Mammary epithelial cell (primary cell): ENCODE measurements at regions of chr5 and their contacts with region 1.

Region 1: GRCh38 chr5:149960272-149961185 is at the start of gene SLC26A2:
- DNase-seq: peak; percentile 98
- H3K4me3 ChIP-seq: peak within 1 kb of the TSS; percentile 58 to 78 (median 74)
- H3K27ac ChIP-seq: peak within 1 kb of the TSS; percentile 75
- H3K4me1 ChIP-seq: peaks cover 23% of the 10 kb centered on the region
- H3K27me3 ChIP-seq: no peaks in the 10 kb centered on the region
- CTCF ChIP-seq: no peak
- total RNA-seq, gene SLC26A2: 18.1 to 63.2 TPM

Region 2: DNA sequence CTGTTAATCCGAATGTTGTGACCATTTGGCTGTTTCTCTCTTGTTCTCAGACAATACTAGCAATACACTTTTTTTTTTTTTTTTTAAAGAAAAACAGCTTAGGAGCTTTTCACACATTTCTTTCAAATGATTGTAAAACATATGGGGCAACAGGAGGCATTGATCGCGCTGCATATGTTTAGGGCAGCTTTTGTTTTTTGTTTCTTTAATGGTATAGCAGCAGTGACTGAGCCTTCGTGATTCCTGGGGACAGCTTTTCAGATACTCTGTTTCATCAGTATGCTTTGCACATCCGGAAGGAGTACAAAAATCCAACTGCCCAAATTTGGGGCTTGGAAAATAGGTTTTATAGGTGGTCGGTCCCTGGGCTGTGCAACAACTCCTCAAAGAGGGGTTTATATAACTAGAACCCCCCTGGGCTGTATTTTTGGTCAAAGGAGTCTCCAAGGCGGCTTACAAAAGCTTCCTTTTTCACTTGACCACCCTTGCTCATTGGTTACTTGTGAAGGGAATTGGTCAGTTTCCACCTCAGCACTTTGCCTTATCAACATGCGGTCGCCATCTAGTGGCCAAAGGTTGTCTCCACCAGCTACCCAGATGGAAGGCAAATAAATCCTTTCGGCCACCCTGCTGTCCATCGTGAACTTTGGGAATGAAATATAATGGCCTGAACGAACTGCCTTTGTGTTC is 107.7 kb before region 1 on chr5:
- CTCF ChIA-PET with region 1: interaction called, 15 read pairs
- dilution Hi-C with region 1: no loop called
- in situ Hi-C with region 1: loop called in 1 of 2 experiments (anchors 5 kb)
- intact Hi-C with region 1: loop called (anchors 1 kb)
- DNase-seq: peak; percentile 49
- H3K4me3 ChIP-seq: no peak overlapping the region
- H3K27ac ChIP-seq: no peak overlapping the region
- H3K4me1 ChIP-seq: peaks cover 10% of the 10 kb centered on the region
- H3K27me3 ChIP-seq: no peaks in the 10 kb centered on the region
- CTCF ChIP-seq: peak; percentile 91 to 97

Region 3: GRCh38 chr5:149902177-149902576 is 58.4 kb before region 1 on chr5:
- CTCF ChIA-PET with region 1: interaction called, 24 read pairs
- dilution Hi-C with region 1: no loop called
- in situ Hi-C with region 1: no loop called
- intact Hi-C with region 1: loop called (anchors 5 kb)
- DNase-seq: no peak
- H3K4me3 ChIP-seq: no peak overlapping the region
- H3K27ac ChIP-seq: no peak overlapping the region
- H3K4me1 ChIP-seq: no peaks in the 10 kb centered on the region
- H3K27me3 ChIP-seq: no peaks in the 10 kb centered on the region
- CTCF ChIP-seq: no peak

Region 4: GRCh38 chr5:149938791-149939358 is 21.7 kb before region 1 on chr5:
- CTCF ChIA-PET with region 1: no interaction called
- dilution Hi-C with region 1: no loop called
- in situ Hi-C with region 1: no loop called
- intact Hi-C with region 1: loop called (anchors 1 kb)
- DNase-seq: peak; percentile 98
- H3K4me3 ChIP-seq: peak overlapping the region in 1 of 3 experiments; percentile 17
- H3K27ac ChIP-seq: peak overlapping the region; percentile 100
- H3K4me1 ChIP-seq: peaks cover 68% of the 10 kb centered on the region
- H3K27me3 ChIP-seq: no peaks in the 10 kb centered on the region
- CTCF ChIP-seq: peak in 1 of 2 donors; percentile 7